A673 (cell line): ENCODE measurements at regions of chr9 and their contacts with region 1.

Region 1: GRCh38 chr9:77751341-77752091 is 103.4 kb upstream of the GNA14 start:
- DNase-seq: peak; percentile 93
- H3K4me3 ChIP-seq: no peak overlapping the region
- H3K27ac ChIP-seq: peak overlapping the region; percentile 86
- H3K4me1 ChIP-seq: peaks cover 50% of the 10 kb centered on the region
- H3K27me3 ChIP-seq: no peaks in the 10 kb centered on the region
- CTCF ChIP-seq: peak; percentile 75

Region 2: DNA sequence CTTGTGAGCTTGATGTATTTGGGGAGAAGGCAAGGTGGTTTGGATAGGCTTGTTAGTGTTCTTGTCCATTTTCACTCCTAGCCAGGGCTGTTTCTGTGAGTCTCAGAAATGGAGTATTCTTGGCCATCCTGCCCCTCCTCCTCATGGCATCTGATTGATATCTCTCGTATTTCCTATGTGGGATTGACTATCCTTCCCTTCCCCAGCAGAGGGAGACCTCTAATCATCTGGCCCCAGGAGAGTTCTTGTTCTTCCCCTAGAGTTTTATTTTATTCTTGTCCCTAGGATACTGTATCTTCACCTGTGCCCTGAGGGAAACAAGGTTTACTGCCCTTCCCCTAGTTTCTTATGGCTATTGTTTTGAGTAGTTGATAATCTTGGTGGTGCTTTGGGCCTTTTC is 459.8 kb before region 1 on chr9:
- CTCF ChIA-PET with region 1: no interaction called
- POLR2A ChIA-PET with region 1: no interaction called
- intact Hi-C with region 1: loop called (anchors 2 kb)
- DNase-seq: peak; percentile 75
- H3K4me3 ChIP-seq: no peak overlapping the region
- H3K27ac ChIP-seq: no peak overlapping the region
- H3K4me1 ChIP-seq: no peaks in the 10 kb centered on the region
- H3K27me3 ChIP-seq: no peaks in the 10 kb centered on the region
- CTCF ChIP-seq: peak; percentile 71

Region 3: DNA sequence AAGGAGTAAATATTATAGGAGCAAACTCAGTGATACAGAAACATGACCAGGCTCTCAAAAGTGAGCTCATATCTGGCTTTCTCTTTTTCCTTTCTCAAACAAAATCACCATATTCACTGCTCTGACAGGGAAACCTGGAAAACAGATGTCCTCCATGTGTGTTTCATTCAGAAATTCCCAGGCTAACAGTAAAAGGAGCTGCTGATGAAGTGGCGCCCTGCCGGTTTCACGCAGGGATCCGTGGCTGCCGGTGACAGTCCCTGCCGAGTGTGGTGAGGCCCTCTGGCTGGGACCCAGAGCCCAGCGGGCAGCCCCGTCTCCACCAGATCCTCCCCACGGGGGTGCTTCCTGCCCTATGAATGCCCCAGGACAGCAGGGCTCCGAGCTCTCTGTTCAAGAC is 311.5 kb before region 1 on chr9:
- CTCF ChIA-PET with region 1: no interaction called
- POLR2A ChIA-PET with region 1: no interaction called
- intact Hi-C with region 1: loop called (anchors 2 kb)
- DNase-seq: peak; percentile 99
- H3K4me3 ChIP-seq: peak overlapping the region; percentile 10
- H3K27ac ChIP-seq: peak overlapping the region; percentile 95
- H3K4me1 ChIP-seq: peaks cover 55% of the 10 kb centered on the region
- H3K27me3 ChIP-seq: no peaks in the 10 kb centered on the region
- CTCF ChIP-seq: no peak

Region 4: GRCh38 chr9:77640741-77641580 is 110.6 kb before region 1 on chr9:
- CTCF ChIA-PET with region 1: interaction called, 3 read pairs
- POLR2A ChIA-PET with region 1: no interaction called
- intact Hi-C with region 1: loop called (anchors 1 kb)
- DNase-seq: peak; percentile 96
- H3K4me3 ChIP-seq: no peak overlapping the region
- H3K27ac ChIP-seq: peak overlapping the region; percentile 99
- H3K4me1 ChIP-seq: peaks cover 63% of the 10 kb centered on the region
- H3K27me3 ChIP-seq: no peaks in the 10 kb centered on the region
- CTCF ChIP-seq: no peak